ENCODE measurements at regions of chr3 and their contacts with region 1.

Region 1: DNA sequence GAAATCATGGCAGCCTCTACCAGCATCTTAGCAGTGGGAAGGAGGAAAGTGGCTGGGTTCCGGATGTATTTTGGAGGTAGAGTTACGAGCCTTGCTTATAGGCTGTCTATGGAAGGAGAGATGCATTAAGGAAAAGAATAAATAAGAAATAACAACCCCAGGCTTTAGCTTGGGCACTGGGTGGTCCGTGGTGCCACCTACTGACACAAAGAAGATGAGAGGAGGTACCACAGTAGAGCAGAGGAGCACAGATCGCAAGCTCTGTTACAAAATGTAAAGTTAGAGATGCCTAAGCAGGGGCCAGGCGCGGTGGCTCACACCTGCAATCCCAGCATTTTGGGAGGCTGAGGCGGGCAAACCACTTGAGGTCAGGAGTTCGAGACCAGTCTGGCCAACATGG is 74.8 kb downstream of the TMEM39A start:
- DNase-seq: no peak
- ATAC-seq: peak; percentile 85
- H3K4me3 Mint-ChIP-seq: no peak overlapping the region
- H3K27ac Mint-ChIP-seq: no peak overlapping the region
- H3K4me1 Mint-ChIP-seq: peaks cover 4% of the 10 kb centered on the region; the same call in 1 of the 2 replicates
- H3K27me3 Mint-ChIP-seq: no peaks in the 10 kb centered on the region
- CTCF ChIP-seq: no peak

Region 2: GRCh38 chr3:119184796-119185570 is 203.6 kb before region 1 on chr3:
- CTCF ChIA-PET with region 1: no interaction called
- POLR2A ChIA-PET with region 1: no interaction called
- DNase-seq: no peak
- ATAC-seq: no peak
- H3K4me3 Mint-ChIP-seq: no peak overlapping the region
- H3K27ac Mint-ChIP-seq: no peak overlapping the region
- H3K4me1 Mint-ChIP-seq: no peaks in the 10 kb centered on the region
- H3K27me3 Mint-ChIP-seq: no peaks in the 10 kb centered on the region
- CTCF ChIP-seq: no peak

Region 3: DNA sequence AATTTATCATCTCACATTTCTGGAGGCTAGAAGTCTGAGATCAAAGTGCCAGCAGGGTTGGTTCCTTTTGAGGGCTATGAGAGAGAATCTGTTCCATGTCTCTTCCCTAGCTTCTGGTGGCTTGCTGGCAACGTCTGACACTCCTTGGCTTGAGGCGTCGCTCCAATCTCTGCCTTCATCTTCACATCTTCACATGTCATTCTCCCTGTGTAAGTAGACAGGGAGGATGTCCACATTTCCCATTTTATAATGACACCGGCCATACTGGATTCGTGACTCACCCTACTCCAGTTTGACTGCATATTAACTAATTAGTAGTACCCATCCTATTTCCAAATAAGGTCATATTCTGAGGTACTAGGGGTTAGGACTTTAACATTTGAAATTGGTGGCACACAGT is 111.9 kb before region 1 on chr3:
- CTCF ChIA-PET with region 1: interaction called, 20 read pairs
- POLR2A ChIA-PET with region 1: no interaction called
- DNase-seq: no peak
- ATAC-seq: no peak
- H3K4me3 Mint-ChIP-seq: no peak overlapping the region
- H3K27ac Mint-ChIP-seq: no peak overlapping the region
- H3K4me1 Mint-ChIP-seq: peaks cover 11% of the 10 kb centered on the region
- H3K27me3 Mint-ChIP-seq: peaks cover 2% of the 10 kb centered on the region; the same call in 1 of the 2 replicates
- CTCF ChIP-seq: no peak

Region 4: DNA sequence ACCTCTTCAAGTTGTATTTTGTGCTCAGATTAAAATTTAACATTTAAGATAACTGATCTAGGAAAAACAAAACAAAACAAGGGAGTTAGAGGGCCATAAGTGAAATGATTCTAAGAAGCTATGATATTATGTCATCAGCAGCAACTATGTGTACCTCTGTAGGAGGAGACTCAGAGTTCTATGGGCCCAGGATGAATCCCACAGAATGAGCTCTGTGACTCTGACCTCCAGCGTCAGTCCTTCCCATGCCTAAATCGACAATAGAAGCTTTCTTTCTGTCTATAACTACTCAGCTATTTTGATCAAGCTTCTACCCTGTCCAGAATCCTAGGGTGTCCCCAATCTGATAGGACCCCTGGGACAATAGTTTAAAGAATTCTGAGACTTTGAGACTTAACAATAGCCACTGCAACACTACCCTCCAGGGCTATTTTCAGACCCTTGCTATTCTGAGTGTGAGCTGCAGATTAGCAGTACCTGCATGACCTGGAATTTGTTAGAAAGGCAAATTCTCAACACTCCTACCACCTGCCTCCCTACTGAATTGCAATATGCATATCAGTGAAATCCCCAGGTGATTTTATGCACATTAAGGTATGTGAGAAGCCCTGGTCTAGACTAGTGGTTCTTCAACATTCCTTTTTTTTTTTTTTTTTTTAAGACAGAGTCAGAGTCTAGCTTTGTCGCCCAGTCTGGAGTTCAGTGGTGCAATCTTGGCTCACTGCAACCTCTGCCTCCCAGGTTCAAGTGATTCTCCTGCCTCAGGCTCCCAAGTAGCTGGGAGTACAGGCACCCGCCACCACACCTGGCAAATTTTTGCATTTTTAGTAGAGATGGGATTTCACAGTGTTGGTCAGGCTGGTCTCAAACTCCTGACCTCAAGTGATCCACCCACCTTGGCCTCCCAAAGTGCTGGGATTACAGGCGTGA is 27.6 kb before region 1 on chr3:
- CTCF ChIA-PET with region 1: no interaction called
- POLR2A ChIA-PET with region 1: no interaction called
- DNase-seq: no peak
- ATAC-seq: peak; percentile 72
- H3K4me3 Mint-ChIP-seq: peak overlapping the region; percentile 19; the same call in 1 of the 2 replicates
- H3K27ac Mint-ChIP-seq: peak overlapping the region; percentile 78
- H3K4me1 Mint-ChIP-seq: peaks cover 68% of the 10 kb centered on the region
- H3K27me3 Mint-ChIP-seq: no peaks in the 10 kb centered on the region
- CTCF ChIP-seq: no peak

Region 5: GRCh38 chr3:119376758-119377157 is 11.8 kb before region 1 on chr3:
- CTCF ChIA-PET with region 1: no interaction called
- POLR2A ChIA-PET with region 1: no interaction called
- DNase-seq: no peak
- ATAC-seq: no peak
- H3K4me3 Mint-ChIP-seq: no peak overlapping the region
- H3K27ac Mint-ChIP-seq: no peak overlapping the region
- H3K4me1 Mint-ChIP-seq: peaks cover 32% of the 10 kb centered on the region
- H3K27me3 Mint-ChIP-seq: no peaks in the 10 kb centered on the region
- CTCF ChIP-seq: no peak

Measured in WTC11 (cell line).